Keratinocyte (primary cell): ENCODE measurements at regions of chr13 and their contacts with region 1.

Region 1: DNA sequence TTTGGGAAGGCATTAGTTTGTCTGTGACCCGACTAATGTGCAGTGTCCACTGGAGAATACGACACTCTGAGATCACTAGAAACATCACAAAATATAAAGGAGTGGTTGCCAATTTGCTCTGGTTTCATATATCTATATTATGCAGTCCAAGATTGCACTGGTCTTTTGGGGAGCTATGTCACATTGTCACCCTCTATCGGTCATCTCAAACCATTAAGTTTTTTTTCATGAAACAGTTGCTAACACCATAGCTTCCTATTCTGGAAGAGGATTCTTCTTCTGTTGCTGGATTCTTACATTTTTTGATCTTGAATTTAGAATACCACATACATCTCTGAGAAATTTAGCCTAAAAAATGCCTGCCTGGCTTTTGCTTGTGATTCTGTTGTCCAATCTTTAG is 168.6 kb downstream of the LACC1 start:
- DNase-seq: no peak
- H3K4me3 ChIP-seq: no peak overlapping the region
- H3K27ac ChIP-seq: no peak overlapping the region
- H3K4me1 ChIP-seq: no peaks in the 10 kb centered on the region
- H3K27me3 ChIP-seq: no peaks in the 10 kb centered on the region
- CTCF ChIP-seq: no peak

Region 2: GRCh38 chr13:44231786-44232516 is 183.6 kb after region 1 on chr13:
- dilution Hi-C with region 1: no loop called
- DNase-seq: peak; percentile 87
- H3K4me3 ChIP-seq: no peak overlapping the region
- H3K27ac ChIP-seq: peak overlapping the region; percentile 84
- H3K4me1 ChIP-seq: peaks cover 16% of the 10 kb centered on the region
- H3K27me3 ChIP-seq: no peaks in the 10 kb centered on the region
- CTCF ChIP-seq: peak in 1 of 3 experiments; percentile 41

Region 3: DNA sequence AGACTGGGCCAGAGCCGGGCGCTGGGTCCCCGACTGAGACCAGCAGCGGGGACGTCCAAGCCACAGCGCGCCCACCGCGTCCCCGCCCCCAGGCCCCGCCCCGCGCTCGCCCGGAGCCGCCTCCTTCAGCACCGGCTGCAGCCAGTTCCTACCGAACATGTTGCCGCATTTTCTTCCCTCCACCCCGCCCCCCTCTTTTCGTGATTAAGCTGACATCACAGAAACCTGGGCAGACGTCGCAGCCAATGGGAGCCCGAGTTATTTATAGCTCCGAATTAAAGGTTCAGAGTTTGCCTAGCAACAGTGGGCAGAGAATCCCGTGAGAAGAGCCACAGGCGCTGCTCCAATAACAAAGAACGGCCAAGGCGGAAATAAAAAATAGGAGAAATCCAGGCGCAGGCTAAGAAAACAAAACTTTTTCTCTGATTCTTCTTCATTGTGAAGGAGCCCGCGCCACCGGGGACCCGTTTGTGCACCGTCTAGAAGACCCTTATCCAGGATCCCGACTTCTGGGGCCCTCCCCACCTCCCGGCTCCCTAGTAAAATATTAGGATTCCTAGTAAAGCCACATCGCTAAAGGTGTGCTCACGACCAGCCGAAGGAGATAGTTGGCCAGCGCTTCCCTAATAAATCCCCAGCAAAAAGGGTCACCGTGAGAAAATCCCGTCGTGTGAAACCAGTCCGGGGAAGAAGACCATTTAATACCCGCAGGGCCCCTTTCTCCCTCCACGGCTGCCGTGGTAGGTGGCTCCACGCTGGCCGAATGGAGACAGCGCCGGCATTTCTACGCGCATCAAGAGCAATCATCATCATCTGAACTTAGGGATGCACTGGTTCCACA is 387.0 kb after region 1 on chr13:
- dilution Hi-C with region 1: loop called (anchors 25 kb)
- DNase-seq: peak; percentile 73
- H3K4me3 ChIP-seq: peak overlapping the region; percentile 76 to 90 (median 80)
- H3K27ac ChIP-seq: peak overlapping the region; percentile 95
- H3K4me1 ChIP-seq: peaks cover 14% of the 10 kb centered on the region
- H3K27me3 ChIP-seq: no peaks in the 10 kb centered on the region
- CTCF ChIP-seq: no peak